Gastrocnemius medialis (tissue), 4 donors: ENCODE measurements at regions of chrX and their contacts with region 1.

Region 1: GRCh38 chrX:16060252-16060651 is 63.1 kb upstream of the GRPR start:
- DNase-seq: no peak
- ATAC-seq: no peak
- H3K4me3 ChIP-seq: no peak overlapping the region
- H3K27ac ChIP-seq: no peak overlapping the region
- H3K4me1 ChIP-seq: no peaks in the 10 kb centered on the region
- H3K27me3 ChIP-seq: no peaks in the 10 kb centered on the region
- CTCF ChIP-seq: no peak
- POLR2A ChIP-seq: no peak

Region 2: GRCh38 chrX:16114611-16115010 is 54.4 kb after region 1 on chrX:
- in situ Hi-C with region 1: no loop called
- intact Hi-C with region 1: no loop called
- DNase-seq: no peak
- ATAC-seq: no peak
- H3K4me3 ChIP-seq: no peak overlapping the region
- H3K27ac ChIP-seq: no peak overlapping the region
- H3K4me1 ChIP-seq: no peaks in the 10 kb centered on the region
- H3K27me3 ChIP-seq: no peaks in the 10 kb centered on the region
- CTCF ChIP-seq: no peak
- POLR2A ChIP-seq: no peak

Region 3: DNA sequence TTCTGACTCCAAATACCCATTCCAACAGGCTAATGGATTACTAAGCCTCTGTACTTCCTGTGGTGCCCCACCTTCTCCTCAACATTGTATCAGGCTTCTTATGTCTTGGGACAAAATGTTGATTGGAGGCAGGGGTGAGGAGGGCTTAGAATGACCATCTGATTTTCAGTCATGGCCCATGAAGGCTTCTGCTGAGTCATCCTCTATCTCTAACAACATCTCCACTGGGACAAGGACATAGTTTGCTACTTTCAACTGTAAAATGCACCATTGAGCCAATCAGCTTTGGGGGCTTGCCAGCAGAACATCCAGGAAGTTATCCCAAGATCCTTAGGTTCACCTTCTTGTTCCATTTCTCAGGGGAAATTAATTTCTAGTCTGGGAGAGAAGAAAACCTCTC is 136.6 kb after region 1 on chrX:
- in situ Hi-C with region 1: no loop called
- intact Hi-C with region 1: no loop called
- DNase-seq: no peak
- ATAC-seq: no peak
- H3K4me3 ChIP-seq: no peak overlapping the region
- H3K27ac ChIP-seq: no peak overlapping the region
- H3K4me1 ChIP-seq: no peaks in the 10 kb centered on the region
- H3K27me3 ChIP-seq: no peaks in the 10 kb centered on the region
- CTCF ChIP-seq: no peak
- POLR2A ChIP-seq: no peak

Region 4: GRCh38 chrX:16528620-16529019 is 468.4 kb after region 1 on chrX:
- in situ Hi-C with region 1: no loop called
- intact Hi-C with region 1: no loop called
- DNase-seq: no peak
- ATAC-seq: no peak
- H3K4me3 ChIP-seq: no peak overlapping the region
- H3K27ac ChIP-seq: no peak overlapping the region
- H3K4me1 ChIP-seq: no peaks in the 10 kb centered on the region
- H3K27me3 ChIP-seq: no peaks in the 10 kb centered on the region
- CTCF ChIP-seq: no peak
- POLR2A ChIP-seq: no peak

Region 5: GRCh38 chrX:16566571-16566970 is 506.3 kb after region 1 on chrX:
- in situ Hi-C with region 1: no loop called
- intact Hi-C with region 1: loop called (anchors 5 kb)
- DNase-seq: no peak
- ATAC-seq: no peak
- H3K4me3 ChIP-seq: no peak overlapping the region
- H3K27ac ChIP-seq: no peak overlapping the region
- H3K4me1 ChIP-seq: no peaks in the 10 kb centered on the region
- H3K27me3 ChIP-seq: no peaks in the 10 kb centered on the region
- CTCF ChIP-seq: no peak
- POLR2A ChIP-seq: no peak